ENCODE measurements at regions of chr19 and their contacts with region 1.

Region 1: GRCh38 chr19:14363183-14364097 is 17.8 kb upstream of the ADGRE5 start:
- DNase-seq: peak; percentile 38

Region 2: GRCh38 chr19:14337510-14337909 is 25.9 kb before region 1 on chr19:
- CTCF ChIA-PET with region 1: no interaction called
- POLR2A ChIA-PET with region 1: no interaction called
- DNase-seq: peak; percentile 83

Region 3: GRCh38 chr19:14405758-14406644 is 42.6 kb after region 1 on chr19:
- CTCF ChIA-PET with region 1: interaction called, 13 read pairs
- POLR2A ChIA-PET with region 1: interaction called, 7 read pairs
- DNase-seq: peak; percentile 99

Measured in HEK293T (cell line).